ENCODE measurements at regions of chr1 and their contacts with region 1.

Region 1: GRCh38 chr1:93814059-93814794 is 64.8 kb downstream of the DNTTIP2 start:
- DNase-seq: peak in 1 of 2 donors; percentile 80
- H3K4me3 ChIP-seq: no peak overlapping the region
- CTCF ChIP-seq: peak in 2 of 3 donors; percentile 9 to 77
- POLR2A ChIP-seq: no peak

Region 2: GRCh38 chr1:93437976-93438605 is 376.1 kb before region 1 on chr1:
- intact Hi-C with region 1: loop called (anchors 10 kb)
- DNase-seq: no peak
- H3K4me3 ChIP-seq: no peak overlapping the region
- CTCF ChIP-seq: peak in 1 of 3 donors; percentile 24
- POLR2A ChIP-seq: no peak

Region 3: DNA sequence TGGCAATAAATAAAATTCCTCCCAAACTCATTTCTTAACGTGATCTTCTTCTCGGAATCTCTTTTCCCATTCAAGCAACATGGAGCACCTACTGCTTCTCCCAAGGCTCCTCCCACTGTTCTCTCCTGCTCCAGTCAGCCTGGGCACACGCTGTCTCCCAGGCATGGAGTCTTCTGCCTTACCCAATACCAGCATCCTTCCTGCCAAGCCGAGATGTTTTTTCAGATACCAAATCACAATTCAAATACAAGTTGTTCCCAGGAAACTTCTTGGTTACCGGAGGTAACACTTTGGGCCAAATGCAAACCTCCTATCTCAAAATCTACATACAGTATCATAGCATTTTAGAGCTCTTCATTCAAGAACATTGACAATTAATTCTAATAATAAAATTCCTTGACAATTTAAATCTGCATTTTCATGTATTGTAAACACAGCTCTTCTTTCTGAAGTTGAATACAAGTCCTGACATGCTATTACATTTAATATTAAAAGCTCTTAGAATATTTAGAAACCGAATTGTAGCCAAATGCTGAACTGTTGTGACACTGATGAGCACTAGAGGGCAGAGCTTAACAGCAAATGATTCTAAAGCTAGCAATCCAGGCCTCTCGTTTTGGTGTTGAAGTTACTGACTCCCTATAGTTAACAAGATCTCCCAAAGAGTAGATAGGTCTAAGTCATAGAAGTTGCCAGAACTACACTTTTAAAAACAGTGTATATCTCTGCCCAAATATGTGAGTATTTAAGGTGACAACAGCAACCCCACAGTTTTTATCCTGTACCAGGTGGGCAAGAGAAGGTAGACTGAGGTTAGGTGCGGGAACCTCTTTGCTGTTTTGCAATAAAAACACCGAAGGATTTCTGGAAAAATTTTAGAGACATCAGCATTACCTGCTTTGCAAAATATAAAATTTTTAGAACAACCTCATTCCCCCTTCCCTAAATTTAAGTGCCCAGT is 184.8 kb before region 1 on chr1:
- intact Hi-C with region 1: loop called (anchors 2 kb)
- DNase-seq: peak; percentile 68 to 72
- H3K4me3 ChIP-seq: no peak overlapping the region
- CTCF ChIP-seq: peak in 1 of 3 donors; percentile 39
- POLR2A ChIP-seq: no peak

Region 4: GRCh38 chr1:94191216-94191615 is 377.0 kb after region 1 on chr1:
- intact Hi-C with region 1: no loop called
- DNase-seq: no peak
- H3K4me3 ChIP-seq: no peak overlapping the region
- CTCF ChIP-seq: no peak
- POLR2A ChIP-seq: no peak